B cell (primary cell): ENCODE measurements at regions of chr1 and their contacts with region 1.

Region 1: DNA sequence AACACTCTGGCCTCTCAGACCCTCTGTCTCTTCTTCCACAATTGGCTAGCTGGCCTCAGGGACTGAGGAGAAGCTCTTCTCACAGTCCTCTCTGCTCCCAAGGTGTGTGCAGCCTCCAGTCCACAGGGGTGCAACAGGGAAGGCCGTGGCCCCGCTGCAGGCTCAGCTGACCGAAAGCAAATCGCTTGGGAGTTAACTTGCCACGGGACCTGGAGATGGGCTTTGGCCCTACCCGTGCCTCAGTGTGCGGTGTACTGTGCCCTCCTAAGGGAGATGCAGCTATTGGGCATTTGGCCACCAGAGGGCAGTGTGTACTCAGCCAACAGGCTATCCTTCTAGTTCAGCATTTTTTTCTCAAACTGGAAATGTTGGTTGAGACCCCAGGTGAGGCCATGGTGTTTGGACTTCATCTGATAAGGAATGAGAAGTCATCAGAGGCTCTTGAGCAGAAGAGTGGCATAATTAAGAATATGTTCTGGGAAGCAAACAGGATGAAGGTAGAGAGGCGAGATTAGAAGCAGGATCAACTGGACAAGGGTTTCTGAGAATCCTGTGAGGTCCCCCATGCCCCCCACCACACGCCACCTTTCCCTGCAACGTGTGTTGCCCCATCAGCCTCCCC is 42.5 kb upstream of the TMEM125 start:
- DNase-seq: peak; percentile 87
- ATAC-seq: peak; percentile 96
- H3K4me3 ChIP-seq: no peak overlapping the region
- H3K4me3 Mint-ChIP-seq: no peak overlapping the region
- H3K27ac ChIP-seq: no peak overlapping the region
- H3K27ac Mint-ChIP-seq: no peak overlapping the region
- H3K4me1 ChIP-seq: peaks cover 4 to 9% of the 10 kb centered on the region in 2 donors
- H3K4me1 Mint-ChIP-seq: peaks cover 10% of the 10 kb centered on the region
- H3K27me3 ChIP-seq: no peaks in the 10 kb centered on the region
- H3K27me3 Mint-ChIP-seq: no peaks in the 10 kb centered on the region
- CTCF ChIP-seq: peak; percentile 95

Region 2: GRCh38 chr1:43035821-43036741 is 191.2 kb before region 1 on chr1:
- CTCF ChIA-PET with region 1: no interaction called
- POLR2A ChIA-PET with region 1: no interaction called
- intact Hi-C with region 1: no loop called
- DNase-seq: no peak
- ATAC-seq: no peak
- H3K4me3 ChIP-seq: no peak overlapping the region
- H3K4me3 Mint-ChIP-seq: no peak overlapping the region
- H3K27ac ChIP-seq: no peak overlapping the region
- H3K27ac Mint-ChIP-seq: no peak overlapping the region
- H3K4me1 ChIP-seq: no peaks in the 10 kb centered on the region
- H3K4me1 Mint-ChIP-seq: peaks cover 4% of the 10 kb centered on the region
- H3K27me3 ChIP-seq: no peaks in the 10 kb centered on the region
- H3K27me3 Mint-ChIP-seq: peaks cover 3% of the 10 kb centered on the region
- CTCF ChIP-seq: no peak

Region 3: DNA sequence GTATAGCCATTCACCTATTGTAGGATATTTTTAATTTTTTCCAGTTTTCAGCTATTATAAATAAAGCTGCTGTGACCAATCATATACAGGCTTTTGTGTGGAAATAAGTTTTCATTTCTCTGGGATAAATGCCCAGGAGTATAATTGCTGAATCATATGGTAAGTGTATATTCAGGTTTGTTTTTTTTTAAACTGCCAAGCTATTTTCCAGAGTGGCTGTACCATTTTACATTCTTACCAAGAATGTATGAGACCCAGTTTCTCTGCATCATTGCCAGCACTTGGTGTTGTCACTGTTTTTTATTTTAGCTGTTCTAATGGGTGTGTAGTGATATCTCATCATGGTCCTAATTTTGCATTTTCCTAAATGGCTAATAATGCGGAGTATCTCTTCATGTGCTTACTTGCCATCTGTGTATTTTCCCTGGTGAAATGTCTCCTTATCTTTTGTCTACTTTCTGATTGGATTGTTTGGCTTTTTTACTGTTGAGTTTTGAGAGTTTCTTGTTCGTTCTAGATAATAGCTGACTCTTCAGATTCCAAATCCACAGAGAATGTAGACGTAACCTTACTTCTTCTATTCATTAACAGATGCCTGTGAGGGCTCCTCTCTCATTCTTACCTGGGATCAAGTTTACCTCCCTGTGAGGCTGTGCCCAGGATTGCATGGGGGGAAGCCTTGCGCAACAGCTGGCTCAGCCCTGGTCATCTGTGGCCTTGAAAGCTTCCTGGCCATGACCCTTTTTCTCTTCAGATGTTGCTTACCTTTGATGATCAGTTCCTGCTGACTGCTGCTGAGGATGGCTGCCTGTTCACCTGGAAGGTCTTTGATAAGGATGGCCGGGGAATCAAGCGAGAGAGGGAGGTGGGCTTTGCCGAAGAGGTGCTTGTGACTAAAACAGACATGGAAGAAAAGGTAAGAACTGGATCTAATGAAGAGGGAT is 12.5 kb before region 1 on chr1:
- CTCF ChIA-PET with region 1: interaction called, 20 read pairs
- POLR2A ChIA-PET with region 1: no interaction called
- intact Hi-C with region 1: no loop called
- DNase-seq: no peak
- ATAC-seq: no peak
- H3K4me3 ChIP-seq: no peak overlapping the region
- H3K4me3 Mint-ChIP-seq: no peak overlapping the region
- H3K27ac ChIP-seq: no peak overlapping the region
- H3K27ac Mint-ChIP-seq: no peak overlapping the region
- H3K4me1 ChIP-seq: no peaks in the 10 kb centered on the region
- H3K4me1 Mint-ChIP-seq: no peaks in the 10 kb centered on the region
- H3K27me3 ChIP-seq: peaks cover 0 to 2% (median 0%) of the 10 kb centered on the region in 4 experiments
- H3K27me3 Mint-ChIP-seq: peaks cover 23% of the 10 kb centered on the region
- CTCF ChIP-seq: no peak

Region 4: DNA sequence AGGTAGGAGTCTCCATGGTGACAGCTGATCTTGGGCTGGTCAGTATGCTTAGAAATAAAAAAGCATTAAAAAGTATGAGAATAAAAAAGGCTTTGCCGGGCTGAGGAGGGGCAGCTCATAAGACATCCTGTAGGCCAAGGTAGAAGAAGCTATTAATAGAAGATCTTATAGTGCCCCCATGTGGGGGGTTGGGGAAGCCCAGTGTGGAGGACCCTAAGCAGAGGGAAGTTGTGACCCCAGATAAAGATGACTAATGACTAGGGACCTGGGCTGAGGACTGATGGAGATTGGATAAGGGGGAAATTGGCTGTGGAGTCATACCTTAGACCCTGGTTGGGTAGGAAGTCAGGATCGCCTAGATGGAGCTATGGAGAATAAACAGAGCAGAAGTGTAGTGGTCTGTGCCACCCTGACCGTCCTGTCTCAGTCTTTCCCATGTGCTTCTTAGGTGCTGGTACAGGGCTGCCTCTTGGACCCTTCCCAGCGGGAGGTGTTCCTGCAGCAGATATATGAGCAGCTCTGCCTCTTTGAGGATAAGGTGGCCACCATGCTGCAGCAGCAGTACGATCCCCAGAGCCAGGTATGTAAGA is 187.5 kb after region 1 on chr1:
- CTCF ChIA-PET with region 1: interaction called, 332 read pairs
- POLR2A ChIA-PET with region 1: interaction called, 6 read pairs
- intact Hi-C with region 1: no loop called
- DNase-seq: peak; percentile 79
- ATAC-seq: peak; percentile 96
- H3K4me3 ChIP-seq: no peak overlapping the region
- H3K4me3 Mint-ChIP-seq: no peak overlapping the region
- H3K27ac ChIP-seq: no peak overlapping the region
- H3K27ac Mint-ChIP-seq: peak overlapping the region; percentile 34
- H3K4me1 ChIP-seq: no peaks in the 10 kb centered on the region
- H3K4me1 Mint-ChIP-seq: peaks cover 3% of the 10 kb centered on the region
- H3K27me3 ChIP-seq: no peaks in the 10 kb centered on the region
- H3K27me3 Mint-ChIP-seq: no peaks in the 10 kb centered on the region
- CTCF ChIP-seq: peak; percentile 79